CD4-positive, alpha-beta memory T cell (primary cell): ENCODE measurements at regions of chr5 and their contacts with region 1.

Region 1: GRCh38 chr5:134041570-134042411 is 37.0 kb upstream of the VDAC1 start:
- DNase-seq: no peak
- H3K4me3 ChIP-seq: no peak overlapping the region
- H3K4me3 Mint-ChIP-seq: peak overlapping the region in 4 of 8 donors; percentile 21 to 67 (median 29)
- H3K27ac ChIP-seq: no peak overlapping the region
- H3K27ac Mint-ChIP-seq: peak overlapping the region in 5 of 7 donors; percentile 30 to 80 (median 74)
- H3K4me1 ChIP-seq: peaks cover 40% of the 10 kb centered on the region
- H3K4me1 Mint-ChIP-seq: peaks cover 16 to 53% (median 38%) of the 10 kb centered on the region in 4 donors
- H3K27me3 ChIP-seq: no peaks in the 10 kb centered on the region
- H3K27me3 Mint-ChIP-seq: no peaks in the 10 kb centered on the region

Region 2: GRCh38 chr5:133944263-133945185 is 97.3 kb before region 1 on chr5:
- CTCF ChIA-PET with region 1: no interaction called
- POLR2A ChIA-PET with region 1: no interaction called
- intact Hi-C with region 1: no loop called
- DNase-seq: peak in 3 of 5 donors; percentile 14 to 19 (median 18)
- H3K4me3 ChIP-seq: no peak overlapping the region
- H3K4me3 Mint-ChIP-seq: no peak overlapping the region
- H3K27ac ChIP-seq: no peak overlapping the region
- H3K27ac Mint-ChIP-seq: no peak overlapping the region
- H3K4me1 ChIP-seq: no peaks in the 10 kb centered on the region
- H3K4me1 Mint-ChIP-seq: no peaks in the 10 kb centered on the region
- H3K27me3 ChIP-seq: no peaks in the 10 kb centered on the region
- H3K27me3 Mint-ChIP-seq: peaks cover 2 to 3% of the 10 kb centered on the region in 2 donors

Region 3: DNA sequence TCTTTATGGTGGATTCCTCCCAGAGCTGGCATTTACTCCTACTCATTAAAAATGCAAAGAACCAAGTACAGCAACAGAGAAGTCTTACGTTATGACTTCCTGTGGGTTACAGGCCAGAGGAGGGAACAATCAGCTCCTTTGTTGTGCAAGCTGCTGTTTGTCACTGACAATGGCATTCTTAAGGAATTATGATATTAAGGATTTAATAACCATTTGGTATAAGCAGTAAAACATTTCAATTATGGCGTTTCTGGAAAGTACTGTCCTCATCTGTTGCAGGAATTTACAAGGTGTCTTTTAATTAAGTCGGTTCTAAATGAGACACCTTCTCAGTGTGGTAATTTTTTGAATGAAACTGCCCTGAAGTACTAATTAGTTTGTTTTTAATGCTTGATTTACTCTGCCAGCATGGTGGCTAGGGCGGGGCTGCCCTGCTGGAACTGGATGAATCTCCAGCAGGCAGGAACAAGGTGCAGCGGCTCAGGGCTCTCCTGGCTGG is 12.1 kb after region 1 on chr5:
- CTCF ChIA-PET with region 1: interaction called, 47 read pairs
- POLR2A ChIA-PET with region 1: interaction called, 7 read pairs
- intact Hi-C with region 1: no loop called
- DNase-seq: peak in 4 of 5 donors; percentile 22 to 30 (median 26)
- H3K4me3 ChIP-seq: no peak overlapping the region
- H3K4me3 Mint-ChIP-seq: peak overlapping the region; percentile 29 to 80 (median 73)
- H3K27ac ChIP-seq: no peak overlapping the region
- H3K27ac Mint-ChIP-seq: peak overlapping the region; percentile 65 to 87 (median 73)
- H3K4me1 ChIP-seq: peaks cover 32% of the 10 kb centered on the region
- H3K4me1 Mint-ChIP-seq: peaks cover 16 to 44% (median 34%) of the 10 kb centered on the region in 4 donors
- H3K27me3 ChIP-seq: no peaks in the 10 kb centered on the region
- H3K27me3 Mint-ChIP-seq: no peaks in the 10 kb centered on the region

Region 4: GRCh38 chr5:134077926-134078580 is 36.3 kb after region 1 on chr5:
- CTCF ChIA-PET with region 1: interaction called, 35 read pairs
- POLR2A ChIA-PET with region 1: interaction called, 8 read pairs
- intact Hi-C with region 1: no loop called
- DNase-seq: no peak
- H3K4me3 ChIP-seq: no peak overlapping the region
- H3K4me3 Mint-ChIP-seq: peak overlapping the region in 7 of 8 donors; percentile 17 to 76 (median 57)
- H3K27ac ChIP-seq: no peak overlapping the region
- H3K27ac Mint-ChIP-seq: peak overlapping the region; percentile 68 to 98 (median 89)
- H3K4me1 ChIP-seq: peaks cover 59% of the 10 kb centered on the region
- H3K4me1 Mint-ChIP-seq: peaks cover 54 to 77% (median 59%) of the 10 kb centered on the region in 4 donors
- H3K27me3 ChIP-seq: no peaks in the 10 kb centered on the region
- H3K27me3 Mint-ChIP-seq: no peaks in the 10 kb centered on the region

Region 5: GRCh38 chr5:134101686-134102439 is 60.1 kb after region 1 on chr5:
- CTCF ChIA-PET with region 1: no interaction called
- POLR2A ChIA-PET with region 1: interaction called, 5 read pairs
- intact Hi-C with region 1: loop called (anchors 1 kb)
- DNase-seq: peak; percentile 62 to 77 (median 73)
- H3K4me3 ChIP-seq: no peak overlapping the region
- H3K4me3 Mint-ChIP-seq: peak overlapping the region in 6 of 8 donors; percentile 10 to 62 (median 36)
- H3K27ac ChIP-seq: peak overlapping the region; percentile 85
- H3K27ac Mint-ChIP-seq: peak overlapping the region; percentile 59 to 96 (median 88)
- H3K4me1 ChIP-seq: peaks cover 95% of the 10 kb centered on the region
- H3K4me1 Mint-ChIP-seq: peaks cover 62 to 98% (median 82%) of the 10 kb centered on the region in 4 donors
- H3K27me3 ChIP-seq: no peaks in the 10 kb centered on the region
- H3K27me3 Mint-ChIP-seq: no peaks in the 10 kb centered on the region

Region 6: GRCh38 chr5:134140530-134141201 is 98.9 kb after region 1 on chr5:
- CTCF ChIA-PET with region 1: interaction called, 603 read pairs
- POLR2A ChIA-PET with region 1: interaction called, 313 read pairs
- intact Hi-C with region 1: loop called (anchors 1 kb)
- DNase-seq: peak; percentile 52 to 70 (median 57)
- H3K4me3 ChIP-seq: no peak overlapping the region
- H3K4me3 Mint-ChIP-seq: peak overlapping the region in 2 of 8 donors; percentile 20 to 24
- H3K27ac ChIP-seq: peak overlapping the region; percentile 97
- H3K27ac Mint-ChIP-seq: peak overlapping the region; percentile 64 to 98 (median 86)
- H3K4me1 ChIP-seq: peaks cover 59% of the 10 kb centered on the region
- H3K4me1 Mint-ChIP-seq: peaks cover 24 to 84% (median 59%) of the 10 kb centered on the region in 4 donors
- H3K27me3 ChIP-seq: no peaks in the 10 kb centered on the region
- H3K27me3 Mint-ChIP-seq: no peaks in the 10 kb centered on the region

Region 7: DNA sequence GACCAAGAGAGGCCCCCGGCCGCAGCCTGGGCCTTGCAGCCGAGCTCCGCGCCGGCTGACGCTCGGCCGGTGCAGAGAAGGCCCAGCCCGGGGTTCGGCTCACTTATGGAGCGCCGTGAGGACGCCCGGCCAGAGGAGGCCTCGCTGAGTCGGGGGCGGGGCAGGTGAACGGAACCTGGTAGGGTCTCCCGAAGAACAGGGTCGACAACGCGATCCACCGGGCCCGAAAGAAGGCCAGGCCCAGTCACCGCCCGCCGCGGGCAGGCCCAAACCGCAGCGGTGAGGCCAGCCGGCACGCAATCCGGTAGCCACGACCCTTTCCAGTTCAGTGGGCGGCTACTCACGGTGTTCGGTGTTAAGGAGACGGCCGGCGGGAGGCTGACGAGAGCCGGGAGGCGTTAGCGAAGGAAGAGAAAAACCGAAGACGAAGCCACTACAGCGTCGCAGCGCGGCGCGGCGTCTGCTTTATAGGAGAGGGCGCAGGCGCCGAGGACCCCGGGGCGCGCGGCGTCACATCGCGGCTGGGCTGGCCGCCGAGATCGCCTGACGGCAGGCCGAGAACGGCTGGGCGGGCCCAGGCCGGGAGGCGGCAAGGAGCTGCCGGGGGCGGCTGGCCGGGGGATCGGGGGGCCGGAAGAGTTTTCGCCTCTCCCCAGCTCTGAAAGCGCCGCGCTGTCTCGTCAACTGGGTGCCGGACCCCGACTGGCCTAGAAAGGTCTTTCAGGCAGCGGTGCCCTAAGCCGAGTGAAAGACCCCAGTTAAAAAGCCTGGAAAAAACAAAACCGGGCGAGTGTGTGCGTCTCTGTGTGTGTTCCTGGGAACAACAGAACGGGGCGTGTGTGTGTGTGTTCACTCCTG is 134.9 kb after region 1 on chr5 and contains the start of gene SKP1:
- CTCF ChIA-PET with region 1: interaction called, 35 read pairs
- POLR2A ChIA-PET with region 1: interaction called, 13 read pairs
- intact Hi-C with region 1: loop called (anchors 1 kb)
- DNase-seq: peak; percentile 81 to 94 (median 91)
- H3K4me3 ChIP-seq: peak within 1 kb of the TSS; percentile 71 to 89
- H3K4me3 Mint-ChIP-seq: peak within 1 kb of the TSS; percentile 98 to 99 (median 98)
- H3K27ac ChIP-seq: peak within 1 kb of the TSS; percentile 97
- H3K27ac Mint-ChIP-seq: peak within 1 kb of the TSS; percentile 97 to 99 (median 98)
- H3K4me1 ChIP-seq: peaks cover 41% of the 10 kb centered on the region
- H3K4me1 Mint-ChIP-seq: peaks cover 21 to 46% (median 30%) of the 10 kb centered on the region in 4 donors
- H3K27me3 ChIP-seq: no peaks in the 10 kb centered on the region
- H3K27me3 Mint-ChIP-seq: no peaks in the 10 kb centered on the region
- total RNA-seq, gene SKP1: 234 to 246 TPM